ENCODE measurements at regions of chr7 and their contacts with region 1.

Region 1: DNA sequence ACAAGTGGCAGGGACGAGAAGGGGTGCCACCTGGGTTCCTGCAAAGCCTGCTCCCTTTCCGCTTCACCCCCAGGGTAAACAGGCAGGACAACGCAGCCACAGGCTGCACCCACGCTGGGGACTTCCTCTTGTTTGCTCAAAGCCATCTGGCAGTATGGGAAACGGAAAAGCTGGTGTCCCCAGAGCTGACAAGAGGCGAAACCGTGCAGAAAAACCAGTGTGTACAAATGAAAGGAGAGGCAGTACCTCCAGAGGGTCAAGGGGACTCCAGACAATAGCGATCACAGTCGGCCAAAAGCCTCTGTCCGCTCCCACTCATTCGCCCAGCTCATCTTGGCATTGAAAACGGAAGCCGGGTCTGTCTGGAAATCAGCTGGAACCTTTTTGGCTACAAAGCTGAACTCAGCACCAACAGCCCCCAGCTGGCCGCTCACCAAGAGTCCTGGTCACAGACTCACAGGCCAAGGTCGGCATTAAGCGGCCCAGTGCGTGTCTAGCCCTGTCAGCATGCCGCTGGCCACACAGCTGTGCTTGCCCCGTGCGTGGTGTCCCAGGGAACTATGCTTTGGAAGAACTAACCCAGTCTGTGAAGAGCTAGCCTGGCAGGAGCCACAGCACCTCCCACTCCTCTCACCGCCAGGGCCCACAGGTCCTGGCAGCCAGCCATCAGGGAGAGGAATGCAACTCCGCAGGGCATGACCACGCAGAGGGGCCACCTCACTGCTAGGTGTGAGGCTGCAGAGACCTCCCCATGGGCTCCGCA is 10.4 kb downstream of the TNS3 start:
- DNase-seq: peak in 1 of 2 experiments; percentile 91
- H3K4me3 ChIP-seq: no peak overlapping the region
- H3K27ac ChIP-seq: no peak overlapping the region
- H3K4me1 ChIP-seq: peaks cover 47% of the 10 kb centered on the region
- H3K27me3 ChIP-seq: no peaks in the 10 kb centered on the region
- CTCF ChIP-seq: no peak

Region 2: DNA sequence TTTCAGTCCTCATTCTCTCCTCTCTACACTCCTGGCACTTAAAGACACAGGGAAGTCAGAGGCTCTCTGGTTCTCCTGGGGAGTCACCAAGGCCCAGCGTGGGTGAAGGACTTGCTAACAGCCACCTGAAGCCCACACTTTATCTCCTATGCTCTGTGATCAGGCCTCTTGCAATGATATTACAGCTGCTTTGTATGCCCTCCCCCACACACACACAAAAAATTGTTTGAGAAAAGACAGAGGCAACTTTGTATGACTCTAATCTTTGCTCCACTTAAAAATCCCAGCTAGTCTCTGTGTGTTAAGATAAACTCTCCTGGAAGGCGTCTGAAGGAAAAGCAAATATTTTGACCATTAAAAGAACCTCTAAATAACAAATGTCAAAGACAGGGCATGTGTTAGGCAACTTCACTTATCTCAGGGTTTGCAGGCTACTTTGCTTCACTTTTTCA is 496.8 kb before region 1 on chr7:
- CTCF ChIA-PET with region 1: no interaction called
- POLR2A ChIA-PET with region 1: no interaction called
- intact Hi-C with region 1: no loop called
- DNase-seq: no peak
- H3K4me3 ChIP-seq: no peak overlapping the region
- H3K27ac ChIP-seq: no peak overlapping the region
- H3K4me1 ChIP-seq: no peaks in the 10 kb centered on the region
- H3K27me3 ChIP-seq: no peaks in the 10 kb centered on the region
- CTCF ChIP-seq: no peak

Region 3: DNA sequence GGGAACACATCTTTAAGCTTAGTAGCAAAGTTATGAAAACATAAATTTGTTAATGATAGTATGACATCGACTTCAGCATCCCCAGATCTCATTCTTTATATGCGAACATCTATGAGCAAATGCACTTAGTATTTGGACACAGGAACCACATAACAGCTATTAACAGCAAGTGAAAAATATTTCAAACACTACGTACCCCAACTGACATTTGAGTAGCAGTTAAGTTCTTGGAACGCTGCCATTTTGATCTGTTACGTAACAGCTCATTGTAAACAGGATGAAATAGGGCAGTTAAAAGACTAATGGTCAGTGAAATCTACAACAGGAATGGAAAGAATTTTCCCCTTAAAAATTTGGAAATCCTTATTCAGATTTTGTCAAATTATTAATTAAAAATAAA is 418.4 kb before region 1 on chr7:
- CTCF ChIA-PET with region 1: no interaction called
- POLR2A ChIA-PET with region 1: no interaction called
- intact Hi-C with region 1: no loop called
- DNase-seq: peak; percentile 49 to 77
- H3K4me3 ChIP-seq: no peak overlapping the region
- H3K27ac ChIP-seq: no peak overlapping the region
- H3K4me1 ChIP-seq: peaks cover 14% of the 10 kb centered on the region
- H3K27me3 ChIP-seq: no peaks in the 10 kb centered on the region
- CTCF ChIP-seq: no peak

Region 4: GRCh38 chr7:47361746-47362215 is 209.7 kb before region 1 on chr7:
- CTCF ChIA-PET with region 1: no interaction called
- POLR2A ChIA-PET with region 1: no interaction called
- intact Hi-C with region 1: loop called (anchors 5 kb)
- DNase-seq: peak; percentile 88 to 95
- H3K4me3 ChIP-seq: no peak overlapping the region
- H3K27ac ChIP-seq: peak overlapping the region; percentile 69
- H3K4me1 ChIP-seq: peaks cover 20% of the 10 kb centered on the region
- H3K27me3 ChIP-seq: no peaks in the 10 kb centered on the region
- CTCF ChIP-seq: no peak

Region 5: GRCh38 chr7:47511699-47512370 is 59.7 kb before region 1 on chr7:
- CTCF ChIA-PET with region 1: no interaction called
- POLR2A ChIA-PET with region 1: no interaction called
- intact Hi-C with region 1: loop called (anchors 1 kb)
- DNase-seq: no peak
- H3K4me3 ChIP-seq: no peak overlapping the region
- H3K27ac ChIP-seq: no peak overlapping the region
- H3K4me1 ChIP-seq: peaks cover 44% of the 10 kb centered on the region
- H3K27me3 ChIP-seq: no peaks in the 10 kb centered on the region
- CTCF ChIP-seq: no peak

Region 6: GRCh38 chr7:47528471-47528870 is 43.0 kb before region 1 on chr7:
- CTCF ChIA-PET with region 1: no interaction called
- POLR2A ChIA-PET with region 1: no interaction called
- intact Hi-C with region 1: no loop called
- DNase-seq: no peak
- H3K4me3 ChIP-seq: no peak overlapping the region
- H3K27ac ChIP-seq: no peak overlapping the region
- H3K4me1 ChIP-seq: peaks cover 30% of the 10 kb centered on the region
- H3K27me3 ChIP-seq: no peaks in the 10 kb centered on the region
- CTCF ChIP-seq: no peak

Region 7: GRCh38 chr7:47635091-47636080 is 63.9 kb after region 1 on chr7:
- CTCF ChIA-PET with region 1: no interaction called
- POLR2A ChIA-PET with region 1: no interaction called
- intact Hi-C with region 1: loop called (anchors 1 kb)
- DNase-seq: peak; percentile 80 to 82
- H3K4me3 ChIP-seq: peak overlapping the region; percentile 48
- H3K27ac ChIP-seq: peak overlapping the region; percentile 40
- H3K4me1 ChIP-seq: peaks cover 33% of the 10 kb centered on the region
- H3K27me3 ChIP-seq: no peaks in the 10 kb centered on the region
- CTCF ChIP-seq: no peak

Region 8: GRCh38 chr7:47724335-47724982 is 152.9 kb after region 1 on chr7:
- CTCF ChIA-PET with region 1: no interaction called
- POLR2A ChIA-PET with region 1: interaction called, 4 read pairs
- intact Hi-C with region 1: loop called (anchors 1 kb)
- DNase-seq: peak; percentile 67 to 90
- H3K4me3 ChIP-seq: peak overlapping the region; percentile 16; the same call in 1 of the 2 replicates
- H3K27ac ChIP-seq: peak overlapping the region; percentile 94
- H3K4me1 ChIP-seq: peaks cover 30% of the 10 kb centered on the region
- H3K27me3 ChIP-seq: no peaks in the 10 kb centered on the region
- CTCF ChIP-seq: no peak

Region 9: DNA sequence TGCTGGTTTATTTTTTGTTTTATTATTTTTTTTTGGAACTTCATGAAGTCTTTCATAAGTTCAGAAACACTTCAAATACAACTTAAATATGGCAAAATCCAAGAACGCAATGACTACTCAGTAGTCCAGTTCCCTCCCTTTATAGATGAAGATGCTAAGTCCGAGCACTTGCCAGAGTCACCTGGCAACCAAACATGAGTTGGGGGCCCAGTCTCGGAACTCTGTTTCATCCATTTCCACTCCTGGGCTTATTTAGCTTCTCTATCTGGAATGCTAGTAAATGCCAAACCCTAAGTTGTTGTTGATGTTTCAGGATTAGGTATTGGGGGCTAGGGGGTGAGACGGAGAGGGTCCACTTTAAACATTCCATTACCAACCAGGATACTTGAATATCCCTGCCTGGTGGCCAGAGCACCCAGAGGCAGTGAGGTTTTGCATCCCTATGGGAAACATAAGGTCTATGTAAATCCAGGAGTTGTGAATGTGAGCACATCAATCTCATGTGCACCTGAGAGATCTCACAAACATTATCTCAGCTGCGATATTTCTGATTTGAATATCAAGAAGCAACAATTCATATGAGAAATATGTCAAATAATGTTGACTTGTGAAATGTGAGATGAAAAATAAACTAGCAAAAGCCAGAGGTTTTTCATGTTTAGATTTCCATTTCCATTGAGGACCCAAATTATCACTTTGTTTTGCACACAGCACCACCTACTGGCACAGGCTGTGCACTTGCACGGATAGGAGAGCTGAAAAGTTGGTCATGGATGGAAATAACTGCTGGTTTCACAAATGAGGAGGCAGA is 247.5 kb after region 1 on chr7:
- CTCF ChIA-PET with region 1: no interaction called
- POLR2A ChIA-PET with region 1: interaction called, 3 read pairs
- intact Hi-C with region 1: loop called (anchors 1 kb)
- DNase-seq: peak; percentile 81 to 83
- H3K4me3 ChIP-seq: no peak overlapping the region
- H3K27ac ChIP-seq: peak overlapping the region; percentile 43
- H3K4me1 ChIP-seq: peaks cover 38% of the 10 kb centered on the region
- H3K27me3 ChIP-seq: no peaks in the 10 kb centered on the region
- CTCF ChIP-seq: peak; percentile 100